OCI-LY7 (cell line): ENCODE measurements at regions of chr3 and their contacts with region 1.

Region 1: DNA sequence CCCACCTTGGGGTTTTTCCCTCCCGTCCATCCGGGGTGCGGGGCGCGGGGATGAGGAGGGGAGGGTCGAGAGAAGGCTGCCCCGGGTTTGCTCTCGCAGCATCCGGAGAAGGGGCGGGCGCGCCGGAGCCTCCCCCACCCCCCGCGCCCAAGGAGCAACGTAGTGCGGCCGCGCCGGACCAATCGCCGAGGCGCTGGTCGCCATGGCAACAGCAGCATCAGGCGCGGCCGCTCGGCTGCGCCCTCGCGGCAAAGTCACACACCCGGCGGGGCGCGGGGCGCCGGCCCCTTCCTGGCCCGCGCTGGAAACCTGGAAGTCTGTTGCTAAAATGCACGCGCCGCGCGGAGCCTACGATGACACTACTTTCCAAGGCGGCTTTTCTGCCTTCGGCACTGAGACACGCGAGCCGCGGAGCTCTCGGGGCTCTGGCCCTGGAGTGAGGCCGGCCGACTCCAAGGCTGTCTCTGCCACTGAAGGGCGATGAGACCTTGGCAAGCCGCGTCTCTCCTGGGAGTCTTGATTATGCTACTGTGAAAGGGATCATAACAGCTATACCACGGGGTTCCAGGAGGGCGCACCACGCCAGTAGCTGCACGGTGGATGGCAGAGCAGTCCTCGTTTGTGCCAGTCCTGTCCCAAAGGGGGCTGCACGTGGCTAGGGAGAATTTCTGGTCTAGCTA is at the start of gene IQSEC1:
- DNase-seq: peak; percentile 93
- H3K4me3 ChIP-seq: peak within 1 kb of the TSS; percentile 77
- H3K27ac ChIP-seq: peak within 1 kb of the TSS; percentile 78
- H3K4me1 ChIP-seq: peaks cover 87% of the 10 kb centered on the region
- CTCF ChIP-seq: peak; percentile 38; the same call in 1 of the 2 replicates
- total RNA-seq, gene IQSEC1: 24.3 and 25.2 TPM in 2 replicates

Region 2: GRCh38 chr3:13051066-13051465 is 22.4 kb before region 1 on chr3:
- CTCF ChIA-PET with region 1: no interaction called
- POLR2A ChIA-PET with region 1: interaction called, 10 read pairs
- intact Hi-C with region 1: loop called (anchors 1 kb)
- DNase-seq: no peak
- H3K4me3 ChIP-seq: no peak overlapping the region
- H3K27ac ChIP-seq: peak overlapping the region; percentile 1
- H3K4me1 ChIP-seq: peaks cover 59% of the 10 kb centered on the region
- CTCF ChIP-seq: no peak

Region 3: DNA sequence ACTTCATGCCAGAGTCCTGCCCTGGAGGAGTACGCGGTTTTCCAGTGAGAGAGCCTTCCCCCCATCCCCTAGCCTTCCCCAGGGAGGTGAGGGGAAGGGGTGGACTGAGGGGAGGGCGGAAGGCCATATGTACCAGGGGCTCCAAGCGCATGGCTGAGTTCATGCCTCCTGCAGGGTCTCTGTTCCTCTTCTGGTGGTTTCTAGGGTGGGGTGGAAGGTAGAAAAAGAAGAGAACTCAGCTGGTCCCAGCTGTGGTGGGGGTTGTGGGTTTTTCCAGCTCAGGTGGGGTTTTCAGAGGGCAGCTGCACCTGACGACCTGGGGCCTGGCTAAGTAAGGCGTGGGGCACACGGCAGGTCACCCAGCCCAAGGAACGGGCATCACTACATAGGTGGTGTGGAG is 10.4 kb after region 1 on chr3:
- CTCF ChIA-PET with region 1: interaction called, 3 read pairs
- POLR2A ChIA-PET with region 1: interaction called, 19 read pairs
- intact Hi-C with region 1: loop called (anchors 1 kb)
- DNase-seq: peak; percentile 88
- H3K4me3 ChIP-seq: peak overlapping the region; percentile 21
- H3K27ac ChIP-seq: peak overlapping the region; percentile 87
- H3K4me1 ChIP-seq: peaks cover 91% of the 10 kb centered on the region
- CTCF ChIP-seq: no peak